ENCODE measurements at regions of chr2 and their contacts with region 1.

Region 1: DNA sequence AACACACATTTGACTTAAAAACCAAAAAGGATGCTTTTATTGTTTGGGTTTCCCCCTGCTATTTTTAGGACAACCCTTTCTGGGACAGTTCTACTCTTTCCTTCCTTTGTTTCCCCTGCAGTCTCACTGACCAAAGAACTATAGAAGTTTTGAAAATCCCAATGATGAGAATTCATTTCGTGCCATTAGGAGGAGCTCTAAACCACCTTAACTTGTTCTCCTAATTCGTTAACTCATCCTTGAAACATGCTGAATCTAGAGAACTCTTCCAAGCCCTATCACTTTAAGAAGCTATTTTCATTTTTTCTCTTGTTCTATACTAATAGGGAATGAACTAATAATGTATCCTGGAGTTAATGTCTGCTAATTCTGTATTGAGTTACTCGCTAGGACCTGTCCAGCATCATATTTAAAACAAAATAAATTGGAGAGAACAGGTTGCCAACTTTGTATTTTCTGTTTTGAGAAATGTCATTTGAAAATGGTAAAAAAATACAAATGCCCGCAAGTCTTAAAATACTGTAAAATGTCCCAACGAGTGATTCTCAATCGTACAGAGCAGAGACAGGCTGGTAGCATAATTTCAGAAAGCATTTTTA is 62.9 kb downstream of the AFTPH start:
- DNase-seq: no peak
- ATAC-seq: peak; percentile 62
- H3K4me3 Mint-ChIP-seq: no peak overlapping the region
- H3K27ac Mint-ChIP-seq: peak overlapping the region; percentile 50
- H3K4me1 Mint-ChIP-seq: peaks cover 17% of the 10 kb centered on the region
- H3K27me3 Mint-ChIP-seq: no peaks in the 10 kb centered on the region
- CTCF ChIP-seq: peak; percentile 77

Region 2: DNA sequence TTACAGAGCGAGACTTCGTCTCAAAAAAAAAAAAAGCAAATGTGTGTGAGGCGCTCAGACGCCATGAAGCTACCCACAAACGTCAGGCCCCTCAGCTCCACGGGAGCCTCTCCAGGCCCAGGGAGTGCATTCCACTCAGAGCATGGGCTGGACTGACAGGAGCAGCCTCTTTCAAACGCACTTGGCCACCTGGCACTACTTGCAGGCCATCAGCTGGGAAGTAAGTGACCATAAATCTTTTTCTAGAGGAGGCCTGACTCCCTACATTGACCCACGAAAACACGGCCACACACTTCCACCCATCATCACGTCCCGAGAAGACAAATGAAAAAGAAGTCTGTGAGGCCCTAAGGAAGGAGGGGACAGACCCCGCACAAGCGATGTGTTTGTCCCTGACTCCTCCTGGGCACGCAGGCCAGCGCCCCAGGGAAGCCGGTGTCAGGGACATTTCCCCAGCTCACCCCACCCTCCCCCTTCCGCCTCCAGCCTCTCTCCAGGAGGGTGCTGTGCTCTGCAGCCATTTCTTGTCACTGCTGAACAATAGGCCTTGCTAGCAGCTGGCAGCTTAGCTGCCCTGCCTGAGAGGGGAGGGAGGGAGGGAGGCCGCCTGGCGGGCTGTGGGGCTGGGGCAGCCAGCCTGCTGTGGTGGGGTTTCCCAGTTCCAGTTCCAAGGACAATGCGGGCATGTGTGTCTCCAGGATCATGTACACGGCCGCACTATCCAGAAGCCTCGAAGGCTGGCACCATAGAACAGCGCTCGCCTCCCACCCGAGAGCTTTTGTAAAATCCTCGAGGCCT is 40.2 kb after region 1 on chr2:
- CTCF ChIA-PET with region 1: interaction called, 10 read pairs
- POLR2A ChIA-PET with region 1: no interaction called
- intact Hi-C with region 1: no loop called
- DNase-seq: no peak
- ATAC-seq: no peak
- H3K4me3 Mint-ChIP-seq: no peak overlapping the region
- H3K27ac Mint-ChIP-seq: no peak overlapping the region
- H3K4me1 Mint-ChIP-seq: peaks cover 14% of the 10 kb centered on the region
- H3K27me3 Mint-ChIP-seq: no peaks in the 10 kb centered on the region
- CTCF ChIP-seq: no peak

Region 3: GRCh38 chr2:64698668-64699444 is 111.9 kb after region 1 on chr2:
- CTCF ChIA-PET with region 1: no interaction called
- POLR2A ChIA-PET with region 1: no interaction called
- intact Hi-C with region 1: loop called (anchors 2 kb)
- DNase-seq: no peak
- ATAC-seq: peak; percentile 86
- H3K4me3 Mint-ChIP-seq: peak overlapping the region; percentile 52
- H3K27ac Mint-ChIP-seq: peak overlapping the region; percentile 89
- H3K4me1 Mint-ChIP-seq: peaks cover 51% of the 10 kb centered on the region
- H3K27me3 Mint-ChIP-seq: no peaks in the 10 kb centered on the region
- CTCF ChIP-seq: no peak

Region 4: DNA sequence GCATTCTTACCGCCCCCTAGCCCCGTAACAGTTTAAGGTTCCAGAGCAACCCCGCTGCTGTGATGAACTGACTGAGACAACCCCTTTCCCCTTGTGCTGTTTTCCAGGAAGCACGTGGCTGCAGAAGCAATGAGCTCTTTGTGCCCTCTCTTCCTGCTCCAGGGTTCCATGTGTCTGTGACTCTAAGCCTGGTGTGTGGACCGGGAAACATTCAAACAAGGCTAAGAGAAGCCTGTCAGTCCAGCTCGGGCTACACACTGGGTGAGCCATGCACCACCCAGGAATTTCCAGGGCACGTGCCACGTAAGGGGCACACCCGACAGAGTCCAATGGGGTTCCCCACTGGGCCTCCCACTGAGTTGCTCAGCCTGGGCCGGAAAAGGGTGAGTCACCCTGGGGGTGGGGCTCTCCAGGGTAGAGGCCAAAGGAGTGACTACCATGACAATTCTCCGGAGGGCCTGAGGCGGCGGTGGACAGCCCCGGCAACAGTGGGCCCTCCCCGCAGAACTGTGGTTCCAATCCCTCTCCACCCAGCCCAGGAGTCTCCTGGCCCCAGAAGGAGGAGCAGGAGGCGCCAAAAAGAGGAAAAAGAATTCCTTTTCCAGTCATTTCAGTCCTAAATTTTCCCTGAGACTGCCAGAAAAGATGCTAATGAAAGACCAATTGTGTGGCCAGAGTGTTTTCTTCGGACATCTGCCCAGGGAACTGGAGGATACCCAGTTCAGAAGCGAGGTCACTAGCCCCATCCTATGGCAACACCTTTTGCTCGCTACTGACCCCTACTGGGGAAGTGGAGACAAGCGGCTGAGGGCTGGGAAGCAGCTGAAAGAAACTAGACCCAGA is 244.4 kb after region 1 on chr2:
- CTCF ChIA-PET with region 1: interaction called, 6 read pairs
- POLR2A ChIA-PET with region 1: no interaction called
- intact Hi-C with region 1: loop called (anchors 1 kb)
- DNase-seq: peak; percentile 75
- ATAC-seq: peak; percentile 96
- H3K4me3 Mint-ChIP-seq: peak overlapping the region; percentile 63
- H3K27ac Mint-ChIP-seq: peak overlapping the region; percentile 82
- H3K4me1 Mint-ChIP-seq: peaks cover 21% of the 10 kb centered on the region
- H3K27me3 Mint-ChIP-seq: no peaks in the 10 kb centered on the region
- CTCF ChIP-seq: no peak

Region 5: GRCh38 chr2:64873472-64873924 is 286.5 kb after region 1 on chr2:
- CTCF ChIA-PET with region 1: interaction called, 22 read pairs
- POLR2A ChIA-PET with region 1: no interaction called
- intact Hi-C with region 1: loop called (anchors 1 kb)
- DNase-seq: peak; percentile 86
- ATAC-seq: peak; percentile 99
- H3K4me3 Mint-ChIP-seq: peak overlapping the region; percentile 52
- H3K27ac Mint-ChIP-seq: no peak overlapping the region
- H3K4me1 Mint-ChIP-seq: peaks cover 8% of the 10 kb centered on the region
- H3K27me3 Mint-ChIP-seq: no peaks in the 10 kb centered on the region
- CTCF ChIP-seq: peak; percentile 90

Region 6: DNA sequence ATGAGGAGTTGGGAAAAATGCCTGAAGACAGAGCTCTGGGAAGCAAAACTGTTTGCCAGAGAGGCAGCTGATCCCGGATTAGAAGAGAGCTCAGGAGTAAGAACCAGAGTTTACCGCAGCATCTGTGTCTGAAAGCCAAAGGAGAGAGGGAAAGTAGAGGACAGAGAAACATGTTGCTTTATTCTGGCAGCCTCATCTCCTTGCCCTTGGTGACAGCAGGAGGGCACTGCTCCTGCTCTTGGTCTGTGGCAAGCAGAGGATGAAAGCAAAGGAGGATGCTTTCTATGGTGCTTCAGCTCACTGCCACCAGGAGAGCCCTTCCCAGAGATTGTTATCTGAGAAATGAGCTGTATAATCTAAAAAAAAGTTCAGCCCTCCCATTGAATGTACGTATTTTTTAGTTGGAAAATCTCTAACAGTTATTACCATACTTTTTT is 409.9 kb after region 1 on chr2:
- CTCF ChIA-PET with region 1: no interaction called
- POLR2A ChIA-PET with region 1: interaction called, 13 read pairs
- intact Hi-C with region 1: no loop called
- DNase-seq: no peak
- ATAC-seq: no peak
- H3K4me3 Mint-ChIP-seq: no peak overlapping the region
- H3K27ac Mint-ChIP-seq: no peak overlapping the region
- H3K4me1 Mint-ChIP-seq: peaks cover 6% of the 10 kb centered on the region
- H3K27me3 Mint-ChIP-seq: no peaks in the 10 kb centered on the region
- CTCF ChIP-seq: no peak